ENCODE measurements at regions of chr1 and their contacts with region 1.

Region 1: DNA sequence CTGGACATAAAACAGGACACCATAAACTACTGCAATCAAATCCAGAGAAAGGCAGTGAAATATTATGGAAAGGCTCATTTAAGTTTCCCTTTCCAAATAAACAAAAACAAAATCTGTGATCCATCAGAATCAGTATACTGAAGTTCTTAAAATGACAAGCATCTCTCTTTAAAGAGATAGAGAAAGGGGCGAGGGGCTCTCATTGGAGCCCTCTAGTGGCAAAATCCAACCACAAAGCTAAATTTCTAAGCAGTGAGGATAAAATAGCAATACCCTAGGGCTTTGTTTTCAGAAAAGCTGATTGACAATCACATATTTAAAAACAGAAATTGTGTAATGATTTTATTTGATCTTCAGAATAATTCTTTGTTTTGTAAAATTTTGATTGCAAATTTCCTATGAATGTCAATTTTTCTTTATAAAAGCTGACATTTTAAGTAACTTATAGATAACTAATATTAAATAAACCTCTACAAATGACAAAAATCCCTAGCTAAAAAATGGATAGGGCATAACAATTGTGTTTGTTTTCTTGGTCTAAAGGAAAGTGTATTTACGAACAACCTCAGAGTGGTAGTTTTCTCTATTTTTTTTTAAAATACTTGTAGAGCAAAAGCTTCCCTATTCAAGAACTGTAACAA is 138.2 kb downstream of the COL24A1 start:
- DNase-seq: peak; percentile 20
- H3K4me3 ChIP-seq: no peak overlapping the region
- H3K27ac ChIP-seq: no peak overlapping the region
- H3K4me1 ChIP-seq: no peaks in the 10 kb centered on the region
- H3K27me3 ChIP-seq: no peaks in the 10 kb centered on the region
- CTCF ChIP-seq: peak; percentile 60 to 73

Region 2: DNA sequence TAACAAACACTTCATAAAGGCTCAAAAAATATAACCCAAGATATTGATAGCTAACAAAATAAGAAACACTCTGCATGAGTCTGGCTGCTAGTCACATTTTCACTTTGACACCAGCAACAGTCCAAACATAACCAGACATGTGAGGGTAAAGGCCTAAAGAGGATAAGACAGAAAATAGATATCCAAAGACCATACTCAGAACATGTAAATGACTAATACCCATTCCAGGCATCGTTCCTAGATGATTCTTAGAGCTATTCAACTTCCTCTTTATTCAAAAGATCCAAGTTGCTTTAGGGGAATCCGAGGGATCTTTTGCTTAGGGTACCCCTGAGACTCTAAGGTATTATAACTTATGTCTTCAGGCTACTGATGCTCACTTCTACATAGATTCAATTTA is 133.0 kb after region 1 on chr1:
- CTCF ChIA-PET with region 1: no interaction called
- dilution Hi-C with region 1: no loop called
- in situ Hi-C with region 1: no loop called
- intact Hi-C with region 1: loop called (anchors 1 kb)
- DNase-seq: no peak
- H3K4me3 ChIP-seq: no peak overlapping the region
- H3K27ac ChIP-seq: no peak overlapping the region
- H3K4me1 ChIP-seq: peaks cover 17% of the 10 kb centered on the region
- H3K27me3 ChIP-seq: peaks cover 23% of the 10 kb centered on the region
- CTCF ChIP-seq: no peak

Region 3: DNA sequence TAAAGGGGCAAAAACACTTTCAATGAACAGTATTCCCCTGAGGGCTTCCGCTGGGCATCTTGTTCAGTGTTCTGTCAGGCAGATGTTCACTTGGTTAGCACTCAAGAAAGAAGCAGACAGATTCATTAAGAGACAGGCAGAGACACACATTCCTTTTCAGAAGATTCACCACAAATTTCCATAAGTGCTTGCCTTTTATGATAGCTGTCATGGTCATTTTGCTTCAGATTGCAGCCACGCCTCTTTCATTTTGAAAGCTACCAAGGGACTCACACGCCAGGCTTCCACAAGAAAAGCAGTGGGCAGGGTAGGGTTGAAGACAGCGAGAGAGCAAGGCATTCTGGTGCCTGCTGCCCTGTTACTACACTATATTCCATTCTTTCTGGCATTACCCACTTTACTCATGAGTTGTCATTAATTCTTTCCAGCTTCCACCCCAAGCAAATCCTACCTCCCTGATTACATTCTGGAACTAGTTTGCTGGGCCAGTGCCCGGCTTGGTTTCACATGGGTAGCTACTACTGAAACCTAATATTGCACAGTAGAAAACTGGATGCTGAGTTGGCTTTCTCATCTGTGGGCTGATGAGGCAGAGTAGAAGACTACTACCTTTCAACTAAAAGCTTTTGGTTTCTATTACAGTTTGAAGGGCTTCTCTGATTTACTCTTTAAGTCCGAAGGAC is 229.3 kb after region 1 on chr1:
- CTCF ChIA-PET with region 1: no interaction called
- dilution Hi-C with region 1: no loop called
- in situ Hi-C with region 1: no loop called
- intact Hi-C with region 1: no loop called
- DNase-seq: no peak
- H3K4me3 ChIP-seq: no peak overlapping the region
- H3K27ac ChIP-seq: no peak overlapping the region
- H3K4me1 ChIP-seq: no peaks in the 10 kb centered on the region
- H3K27me3 ChIP-seq: no peaks in the 10 kb centered on the region
- CTCF ChIP-seq: no peak